ENCODE measurements at regions of chr11 and their contacts with region 1.

Region 1: GRCh38 chr11:121655537-121656327 is 203.0 kb upstream of the SORL1-AS1 start:
- DNase-seq: peak; percentile 56 to 93
- H3K4me3 ChIP-seq: peak overlapping the region; percentile 53 to 65
- H3K27ac ChIP-seq: peak overlapping the region; percentile 91 to 95
- H3K4me1 ChIP-seq: peaks cover 4 to 8% of the 10 kb centered on the region in 2 donors
- H3K27me3 ChIP-seq: no peaks in the 10 kb centered on the region
- CTCF ChIP-seq: peak; percentile 87 to 96 (median 90)

Region 2: DNA sequence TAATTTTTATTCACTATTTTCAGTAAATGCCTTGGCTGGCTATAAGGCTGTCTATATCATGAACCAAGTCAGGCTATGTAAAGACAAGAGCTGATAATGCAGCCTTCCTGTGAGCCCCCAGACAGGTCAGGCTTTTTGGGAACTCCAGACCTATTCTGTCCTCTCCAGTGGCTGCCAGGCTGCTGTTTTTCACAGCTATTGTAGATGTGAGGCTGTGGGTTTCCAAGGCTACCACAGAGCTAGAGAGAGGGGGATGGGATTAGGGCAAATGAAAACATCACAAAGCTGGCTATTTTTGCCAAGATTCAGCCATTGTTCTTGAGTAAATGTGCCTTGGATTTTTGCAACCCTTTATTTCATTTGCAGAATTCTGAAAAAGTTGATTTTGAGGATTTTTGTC is 147.3 kb before region 1 on chr11:
- intact Hi-C with region 1: no loop called
- DNase-seq: no peak
- H3K4me3 ChIP-seq: no peak overlapping the region
- H3K27ac ChIP-seq: no peak overlapping the region
- H3K4me1 ChIP-seq: peaks cover 0 to 5% of the 10 kb centered on the region in 2 donors
- H3K27me3 ChIP-seq: no peaks in the 10 kb centered on the region
- CTCF ChIP-seq: no peak

Region 3: DNA sequence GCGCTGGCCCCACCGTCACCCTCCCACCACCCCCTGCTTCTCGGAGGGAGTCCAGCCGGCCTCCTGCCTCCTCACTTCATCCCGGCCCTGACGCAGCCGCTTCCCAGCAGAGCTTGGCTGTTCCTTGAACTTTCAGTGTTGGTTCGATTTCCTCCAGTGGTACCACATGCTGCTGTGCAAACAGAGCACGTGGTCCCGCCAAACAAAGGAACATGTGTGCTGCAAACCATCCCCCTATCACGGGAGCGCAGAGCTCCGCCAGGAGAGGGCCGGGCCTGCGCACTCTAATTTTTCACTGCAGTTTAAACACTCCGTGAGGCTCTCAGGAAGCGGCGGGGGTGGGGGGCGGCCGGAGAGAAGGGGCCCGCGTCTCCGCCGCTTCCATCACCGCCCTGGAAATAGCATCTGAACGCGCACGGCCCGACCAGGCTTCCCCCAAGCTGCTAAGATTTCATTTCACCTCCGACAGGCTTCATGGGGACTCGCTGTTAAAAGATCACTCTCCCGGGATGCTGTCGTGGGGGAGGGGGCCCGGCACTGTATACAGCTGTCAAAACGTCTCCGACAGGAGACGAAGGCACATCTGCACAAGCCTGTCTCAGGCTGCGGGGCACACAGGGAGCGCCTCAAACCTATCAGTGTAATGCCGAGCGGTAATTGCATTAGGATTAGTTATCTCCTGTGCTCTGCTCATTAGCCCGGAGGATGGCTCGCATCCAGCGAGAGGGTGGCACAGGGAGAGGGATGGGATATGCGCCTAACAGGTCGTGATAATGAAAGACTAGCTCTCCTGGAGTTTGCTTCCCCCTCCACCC is 66.9 kb after region 1 on chr11:
- intact Hi-C with region 1: loop called (anchors 2 kb)
- DNase-seq: peak; percentile 77 to 89
- H3K4me3 ChIP-seq: peak overlapping the region; percentile 64 to 79
- H3K27ac ChIP-seq: peak overlapping the region; percentile 85 to 93
- H3K4me1 ChIP-seq: no peaks in the 10 kb centered on the region
- H3K27me3 ChIP-seq: no peaks in the 10 kb centered on the region
- CTCF ChIP-seq: peak in 2 of 3 experiments; percentile 9 to 14

Region 4: GRCh38 chr11:121800731-121801393 is 145.1 kb after region 1 on chr11:
- intact Hi-C with region 1: loop called (anchors 5 kb)
- DNase-seq: peak in 1 of 2 donors; percentile 68
- H3K4me3 ChIP-seq: peak overlapping the region in 1 of 2 donors; percentile 30
- H3K27ac ChIP-seq: peak overlapping the region; percentile 70 to 76
- H3K4me1 ChIP-seq: peaks cover 3 to 14% of the 10 kb centered on the region in 2 donors
- H3K27me3 ChIP-seq: no peaks in the 10 kb centered on the region
- CTCF ChIP-seq: no peak

Region 5: DNA sequence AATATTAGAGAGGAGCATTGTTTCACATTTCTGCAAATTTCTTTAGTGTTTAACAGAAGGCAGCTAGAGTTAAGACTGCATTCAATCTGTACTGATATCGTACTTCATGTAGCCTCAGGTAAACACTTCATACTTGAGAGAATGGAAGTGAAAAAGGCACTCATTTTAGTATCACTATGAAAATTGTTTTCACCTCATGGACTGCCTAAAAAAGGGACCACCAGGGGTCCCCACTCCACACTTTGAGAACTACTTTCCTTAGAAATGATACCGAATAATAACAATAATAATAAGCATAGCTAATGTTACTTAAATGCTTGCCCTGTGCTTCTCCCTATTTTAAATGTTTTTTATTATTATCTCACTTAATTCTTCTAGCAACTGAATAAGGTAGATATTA is 365.2 kb after region 1 on chr11:
- intact Hi-C with region 1: loop called (anchors 5 kb)
- DNase-seq: no peak
- H3K4me3 ChIP-seq: no peak overlapping the region
- H3K27ac ChIP-seq: no peak overlapping the region
- H3K4me1 ChIP-seq: peaks cover 0 to 3% of the 10 kb centered on the region in 2 donors
- H3K27me3 ChIP-seq: no peaks in the 10 kb centered on the region
- CTCF ChIP-seq: peak; percentile 32 to 50 (median 40)

Region 6: DNA sequence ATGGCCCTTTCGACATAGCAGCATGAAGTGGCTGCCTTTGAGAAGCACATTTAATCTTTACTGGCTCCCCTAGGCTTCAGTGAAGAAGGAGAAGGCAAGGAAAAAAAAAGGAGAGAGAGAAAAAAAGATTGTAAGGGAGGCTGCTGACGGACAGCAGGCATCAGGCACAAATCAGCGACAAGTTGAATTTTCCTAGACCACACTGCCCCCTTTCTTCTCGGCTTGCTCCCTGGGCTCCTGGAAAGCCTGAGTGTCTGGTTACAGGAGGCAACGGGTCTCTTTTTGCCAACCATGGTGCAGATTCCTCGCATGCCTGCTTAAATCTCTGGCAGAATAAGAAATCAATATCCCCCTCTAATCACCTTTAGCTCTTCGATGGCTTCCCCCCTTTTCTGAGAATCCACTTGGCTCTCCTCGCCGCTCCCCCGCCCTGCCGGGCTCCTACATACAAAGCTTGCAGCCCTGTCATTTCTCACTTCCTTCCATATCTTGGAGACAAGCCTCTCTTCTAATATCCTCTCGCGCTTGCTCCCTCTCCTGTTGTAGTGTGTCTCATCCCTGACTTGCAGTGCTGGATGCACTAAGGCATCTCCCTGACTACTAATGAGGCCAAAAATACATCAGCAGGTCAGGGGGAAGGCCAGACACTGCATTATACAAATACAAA is 446.0 kb after region 1 on chr11:
- intact Hi-C with region 1: loop called (anchors 1 kb)
- DNase-seq: peak in 1 of 2 donors; percentile 86
- H3K4me3 ChIP-seq: peak overlapping the region; percentile 71 to 77
- H3K27ac ChIP-seq: peak overlapping the region; percentile 91
- H3K4me1 ChIP-seq: peaks cover 3 to 25% of the 10 kb centered on the region in 2 donors
- H3K27me3 ChIP-seq: no peaks in the 10 kb centered on the region
- CTCF ChIP-seq: peak; percentile 60 to 80 (median 72)

Region 7: DNA sequence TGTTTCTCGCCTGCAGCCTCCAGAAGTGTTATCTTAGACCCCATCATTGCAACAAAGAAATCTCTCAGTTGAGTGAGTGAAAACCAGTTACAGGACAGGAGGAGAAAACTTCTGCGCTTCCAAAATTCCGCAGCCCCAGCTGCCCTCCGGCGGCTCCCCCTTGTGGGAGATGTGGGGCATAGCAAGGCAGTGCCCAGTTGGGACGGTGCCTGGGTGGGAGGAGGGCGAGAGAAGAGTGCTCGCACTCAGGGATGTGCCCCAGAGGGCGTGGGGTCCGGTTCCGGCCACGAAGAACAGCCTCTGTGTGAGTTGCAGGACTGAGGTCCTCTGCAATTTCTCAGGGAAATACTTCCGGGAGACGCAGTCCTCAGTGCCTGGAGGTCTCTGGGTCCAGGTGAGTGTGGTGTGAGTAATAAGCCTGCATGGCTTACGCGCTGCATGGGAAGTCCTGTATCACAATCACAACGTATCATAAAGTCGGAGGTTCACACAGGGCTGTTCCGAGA is 547.3 kb after region 1 on chr11:
- intact Hi-C with region 1: loop called (anchors 2 kb)
- DNase-seq: peak in 1 of 2 donors; percentile 87
- H3K4me3 ChIP-seq: peak overlapping the region; percentile 29 to 71
- H3K27ac ChIP-seq: peak overlapping the region; percentile 86 to 90
- H3K4me1 ChIP-seq: peaks cover 0 to 51% of the 10 kb centered on the region in 2 donors
- H3K27me3 ChIP-seq: no peaks in the 10 kb centered on the region
- CTCF ChIP-seq: peak; percentile 95 to 98 (median 97)

Region 8: GRCh38 chr11:122367809-122368231 is 712.1 kb after region 1 on chr11:
- intact Hi-C with region 1: loop called (anchors 10 kb)
- DNase-seq: peak in 1 of 2 donors; percentile 71
- H3K4me3 ChIP-seq: peak overlapping the region in 1 of 2 donors; percentile 62
- H3K27ac ChIP-seq: peak overlapping the region; percentile 71 to 82
- H3K4me1 ChIP-seq: peaks cover 0 to 10% of the 10 kb centered on the region in 2 donors
- H3K27me3 ChIP-seq: no peaks in the 10 kb centered on the region
- CTCF ChIP-seq: no peak